ENCODE measurements at regions of chr7 and their contacts with region 1.

Region 1: GRCh38 chr7:77798394-77799077 is at the starts of genes PHTF2 and TMEM60:
- DNase-seq: peak; percentile 99
- ATAC-seq: peak; percentile 83
- total RNA-seq, gene PHTF2: 10.6 to 11.3 TPM
- total RNA-seq, gene TMEM60: 18.3 to 20.3 TPM

Region 2: DNA sequence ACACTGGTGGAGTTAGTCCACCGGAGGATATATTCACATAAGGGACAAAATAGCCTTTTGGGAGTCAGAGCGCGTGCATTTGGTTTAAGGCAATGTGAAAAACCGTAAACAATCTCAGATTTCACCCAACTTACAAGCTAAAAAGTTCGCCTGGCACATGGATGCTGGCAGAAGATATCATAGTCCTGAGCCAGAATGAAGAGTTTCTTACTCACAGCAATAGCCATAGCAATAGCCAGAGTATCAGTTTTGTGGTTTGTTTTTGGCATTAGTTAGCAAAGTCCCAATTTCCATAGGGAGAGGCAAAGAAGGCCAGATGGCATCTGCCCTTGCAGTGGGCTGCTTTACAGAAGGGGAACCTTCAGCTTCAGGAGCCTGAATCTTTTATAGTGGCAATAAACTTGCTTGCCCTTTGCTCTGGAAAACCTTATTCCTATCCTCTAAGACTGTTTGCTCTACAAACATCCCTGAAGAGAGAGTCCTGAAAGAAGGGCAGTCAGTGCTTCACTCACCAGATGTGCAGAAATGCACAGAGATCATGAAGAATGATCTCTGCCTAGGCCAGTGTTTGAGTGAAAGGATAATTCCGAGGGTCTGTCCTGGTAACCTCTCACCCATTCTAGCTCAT is 131.0 kb before region 1 on chr7:
- intact Hi-C with region 1: loop called in 1 of 2 experiments (anchors 5 kb)
- DNase-seq: no peak
- ATAC-seq: peak; percentile 92

Region 3: GRCh38 chr7:78355834-78356233 is 557.3 kb after region 1 on chr7:
- intact Hi-C with region 1: no loop called
- DNase-seq: no peak
- ATAC-seq: no peak

Measured in left colon (tissue), 2 donors.